ENCODE measurements at regions of chr13 and their contacts with region 1.

Region 1: GRCh38 chr13:42969558-42970172 is 22.4 kb downstream of the EPSTI1 start:
- DNase-seq: no peak
- H3K4me3 ChIP-seq: no peak overlapping the region
- H3K27ac ChIP-seq: no peak overlapping the region
- H3K27me3 ChIP-seq: no peaks in the 10 kb centered on the region
- CTCF ChIP-seq: peak; percentile 79

Region 2: GRCh38 chr13:42594970-42595571 is 374.6 kb before region 1 on chr13:
- CTCF ChIA-PET with region 1: interaction called, 11 read pairs
- POLR2A ChIA-PET with region 1: no interaction called
- DNase-seq: peak; percentile 54
- H3K4me3 ChIP-seq: no peak overlapping the region
- H3K27ac ChIP-seq: no peak overlapping the region
- H3K27me3 ChIP-seq: peaks cover 4% of the 10 kb centered on the region
- CTCF ChIP-seq: peak; percentile 80

Region 3: GRCh38 chr13:42991892-42992763 is 22.5 kb after region 1 on chr13 and contains the start of gene EPSTI1:
- CTCF ChIA-PET with region 1: interaction called, 22 read pairs
- POLR2A ChIA-PET with region 1: interaction called, 7 read pairs
- DNase-seq: no peak
- H3K4me3 ChIP-seq: peak within 1 kb of the TSS; percentile 59
- H3K27ac ChIP-seq: peak within 1 kb of the TSS; percentile 66
- H3K27me3 ChIP-seq: no peaks in the 10 kb centered on the region
- CTCF ChIP-seq: no peak
- polyA plus RNA-seq, gene EPSTI1: 4.0 and 6.0 TPM in 2 replicates

Region 4: GRCh38 chr13:43023289-43023951 is 53.8 kb after region 1 on chr13 and contains the start of gene DNAJC15:
- CTCF ChIA-PET with region 1: interaction called, 11 read pairs
- POLR2A ChIA-PET with region 1: no interaction called
- DNase-seq: peak; percentile 68
- H3K4me3 ChIP-seq: peak within 1 kb of the TSS; percentile 77
- H3K27ac ChIP-seq: peak within 1 kb of the TSS; percentile 91
- H3K27me3 ChIP-seq: no peaks in the 10 kb centered on the region
- CTCF ChIP-seq: no peak
- polyA plus RNA-seq, gene DNAJC15: 45.3 and 48.6 TPM in 2 replicates

Region 5: GRCh38 chr13:43804461-43805070 is 834.9 kb after region 1 on chr13:
- CTCF ChIA-PET with region 1: interaction called, 15 read pairs
- POLR2A ChIA-PET with region 1: no interaction called
- DNase-seq: peak; percentile 44
- H3K4me3 ChIP-seq: peak overlapping the region; percentile 43
- H3K27ac ChIP-seq: peak overlapping the region; percentile 83
- H3K27me3 ChIP-seq: no peaks in the 10 kb centered on the region
- CTCF ChIP-seq: peak; percentile 52

Measured in AG04450 (cell line).